ENCODE measurements at regions of chrX and their contacts with region 1.

Region 1: DNA sequence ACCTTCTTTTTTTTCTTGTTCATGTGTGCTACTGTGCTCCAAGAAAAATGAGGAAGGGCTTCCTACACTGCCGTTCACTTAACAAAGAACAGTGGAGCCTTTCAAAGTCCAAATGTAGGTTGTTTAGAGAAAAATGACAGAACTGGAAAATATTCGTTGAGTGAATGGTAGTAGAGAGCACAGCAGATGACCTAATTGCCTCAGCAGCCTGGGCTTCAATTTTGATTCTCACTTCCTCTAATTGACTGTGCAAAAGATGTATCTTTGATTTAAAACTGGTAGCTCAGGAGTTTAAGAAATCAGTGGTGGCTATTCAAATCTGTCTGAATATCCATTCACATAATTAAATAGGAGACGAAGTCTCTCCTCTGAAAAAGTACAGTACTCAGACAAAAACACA is 5.2 kb downstream of the NLGN4X start:
- DNase-seq: no peak

Region 2: GRCh38 chrX:6021316-6022091 is 202.0 kb before region 1 on chrX:
- intact Hi-C with region 1: loop called (anchors 5 kb)
- DNase-seq: peak in 3 of 10 donors; percentile 13 to 43 (median 18)

Region 3: DNA sequence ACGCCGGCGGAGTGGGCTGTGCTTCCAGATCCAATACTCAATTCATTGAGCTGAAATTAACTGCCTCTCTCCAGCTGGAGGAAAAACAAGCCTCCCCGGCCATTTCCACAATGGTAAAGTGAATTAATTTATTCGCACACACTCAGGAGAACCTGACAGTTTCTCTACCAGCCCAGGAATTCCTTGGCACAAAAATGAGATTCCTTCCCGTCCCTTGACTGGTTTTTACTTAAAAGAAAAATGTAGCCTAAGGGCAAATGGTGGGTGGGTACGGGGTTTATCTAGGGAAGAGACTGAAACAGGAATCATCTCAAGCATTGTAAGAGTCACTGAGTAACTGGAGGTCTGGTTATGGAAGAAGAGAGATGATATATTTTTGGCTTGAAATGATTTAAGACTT is 208.7 kb after region 1 on chrX:
- intact Hi-C with region 1: no loop called
- DNase-seq: no peak